ENCODE measurements at regions of chr12 and their contacts with region 1.

Region 1: DNA sequence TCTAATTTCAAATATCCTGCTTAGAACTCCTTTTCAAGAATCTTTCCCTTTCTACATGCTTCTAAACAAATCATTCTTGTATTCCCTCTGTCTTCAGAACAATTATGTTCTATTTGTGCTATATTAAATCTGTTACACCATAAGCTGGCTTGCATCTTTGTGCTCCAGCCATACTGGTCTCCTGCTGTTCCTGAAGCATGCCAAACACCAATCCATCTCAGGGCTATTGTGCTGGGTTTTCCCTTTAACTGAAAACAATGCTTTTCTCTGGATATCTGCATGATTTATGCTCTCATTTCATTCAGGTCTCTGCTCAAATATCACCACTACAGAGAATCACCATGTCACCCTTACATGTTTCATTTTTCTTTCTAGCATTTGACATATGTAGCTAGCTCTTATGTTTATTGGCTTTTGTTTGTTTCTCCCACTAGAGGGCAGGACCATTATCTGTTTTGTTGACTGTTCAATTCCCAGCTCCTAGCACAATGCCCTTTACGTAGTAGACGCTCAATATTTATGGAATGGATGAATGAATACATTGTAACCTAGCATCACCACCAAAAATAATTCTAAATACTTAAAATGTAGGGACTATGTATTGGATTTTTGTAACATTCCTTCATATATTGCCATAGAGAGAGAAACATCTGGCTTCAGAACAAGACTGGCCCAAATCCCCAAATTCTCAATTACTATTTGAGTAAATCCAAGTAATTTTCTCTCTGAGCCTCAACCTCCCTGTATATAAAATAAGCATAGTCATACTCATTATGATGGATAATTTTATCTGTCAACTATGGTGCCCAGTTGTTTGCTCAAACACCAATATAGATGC is 302.0 kb upstream of the SYT1 start:
- DNase-seq: peak in 1 of 10 donors; percentile 25
- H3K4me3 ChIP-seq: no peak overlapping the region
- H3K27ac ChIP-seq: peak overlapping the region in 47 of 59 donors; percentile 1 to 76 (median 48)
- H3K27me3 ChIP-seq: no peaks in the 10 kb centered on the region
- CTCF ChIP-seq: peak in 37 of 56 donors; percentile 6 to 49 (median 28)

Region 2: GRCh38 chr12:78194448-78194847 is 368.1 kb before region 1 on chr12:
- intact Hi-C with region 1: loop called in 1 of 2 experiments (anchors 10 kb)
- DNase-seq: no peak
- H3K4me3 ChIP-seq: no peak overlapping the region
- H3K27ac ChIP-seq: peak overlapping the region in 34 of 59 donors; percentile 1 to 87 (median 67)
- H3K27me3 ChIP-seq: no peaks in the 10 kb centered on the region
- CTCF ChIP-seq: no peak

Region 3: DNA sequence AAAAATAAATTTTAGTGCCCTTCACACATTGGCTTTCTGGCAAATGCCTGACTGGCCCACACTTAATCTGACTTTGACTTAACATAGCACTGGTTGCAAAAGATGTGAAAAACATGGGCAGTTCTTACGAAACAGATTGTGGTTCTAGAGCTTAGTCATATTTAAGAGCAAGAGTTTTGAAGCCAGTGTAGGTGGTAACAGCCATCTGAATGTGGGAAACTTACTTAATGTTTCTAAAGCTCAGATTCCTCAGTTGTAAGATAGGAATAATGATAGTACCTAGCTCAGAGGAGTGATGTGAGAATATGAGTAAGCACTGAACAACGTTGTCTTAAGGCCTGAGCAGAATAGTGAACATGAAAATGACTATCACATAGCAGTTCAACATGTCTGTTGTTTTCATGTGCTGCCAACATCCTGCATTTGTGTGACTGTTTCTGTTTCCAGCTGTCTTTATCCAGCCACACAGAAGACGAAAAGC is 564.7 kb after region 1 on chr12:
- intact Hi-C with region 1: loop called in 1 of 2 experiments (anchors 5 kb)
- DNase-seq: peak in 2 of 10 donors; percentile 28 to 31
- H3K4me3 ChIP-seq: no peak overlapping the region
- H3K27ac ChIP-seq: peak overlapping the region in 35 of 59 donors; percentile 1 to 73 (median 41)
- H3K27me3 ChIP-seq: no peaks in the 10 kb centered on the region
- CTCF ChIP-seq: no peak